BJ (cell line): ENCODE measurements at regions of chr11 and their contacts with region 1.

Region 1: DNA sequence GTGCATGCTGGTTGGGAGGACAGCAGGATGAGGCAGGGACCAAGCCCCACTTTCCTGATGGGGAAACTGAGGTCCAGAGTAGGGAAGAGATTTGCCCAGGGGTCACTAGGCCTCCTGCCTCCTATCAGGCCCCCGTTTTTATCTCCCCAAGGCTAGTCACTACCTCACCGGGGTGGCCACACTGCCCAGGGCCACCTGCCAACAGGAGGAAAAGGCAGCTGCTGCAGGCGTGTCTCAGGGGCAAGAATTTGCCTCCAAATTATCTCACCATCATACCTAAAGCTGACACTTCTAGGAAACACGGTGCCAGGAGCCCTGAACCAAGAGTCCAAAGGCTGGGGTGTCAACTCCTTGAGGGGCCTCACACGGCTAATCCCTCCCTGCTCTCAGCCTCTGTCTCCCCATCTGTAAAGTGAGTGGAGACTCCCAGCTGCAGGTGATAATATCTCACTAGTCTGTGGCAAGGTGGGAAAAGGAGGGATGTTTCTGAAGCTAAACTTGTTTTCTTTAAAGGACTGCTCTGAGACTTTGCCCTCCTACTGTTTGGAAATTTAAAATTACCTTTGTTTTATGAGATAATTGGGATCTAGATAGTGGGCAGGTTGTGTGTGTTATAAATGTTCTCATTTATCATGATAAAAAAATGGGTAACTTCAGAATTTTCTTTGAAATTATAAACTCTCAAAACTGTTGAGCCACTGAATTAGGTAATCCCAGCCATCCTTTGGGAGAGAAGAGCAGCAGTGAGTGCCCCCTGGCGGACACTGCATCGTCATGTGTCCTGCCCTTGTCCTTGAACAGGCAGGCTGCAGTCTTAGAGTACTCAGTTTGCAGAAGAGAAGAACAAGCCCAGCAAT is 60.0 kb downstream of the MYO7A start:
- DNase-seq: no peak
- H3K4me3 ChIP-seq: no peak overlapping the region
- H3K27me3 ChIP-seq: peaks cover 6% of the 10 kb centered on the region
- CTCF ChIP-seq: peak; percentile 92

Region 2: DNA sequence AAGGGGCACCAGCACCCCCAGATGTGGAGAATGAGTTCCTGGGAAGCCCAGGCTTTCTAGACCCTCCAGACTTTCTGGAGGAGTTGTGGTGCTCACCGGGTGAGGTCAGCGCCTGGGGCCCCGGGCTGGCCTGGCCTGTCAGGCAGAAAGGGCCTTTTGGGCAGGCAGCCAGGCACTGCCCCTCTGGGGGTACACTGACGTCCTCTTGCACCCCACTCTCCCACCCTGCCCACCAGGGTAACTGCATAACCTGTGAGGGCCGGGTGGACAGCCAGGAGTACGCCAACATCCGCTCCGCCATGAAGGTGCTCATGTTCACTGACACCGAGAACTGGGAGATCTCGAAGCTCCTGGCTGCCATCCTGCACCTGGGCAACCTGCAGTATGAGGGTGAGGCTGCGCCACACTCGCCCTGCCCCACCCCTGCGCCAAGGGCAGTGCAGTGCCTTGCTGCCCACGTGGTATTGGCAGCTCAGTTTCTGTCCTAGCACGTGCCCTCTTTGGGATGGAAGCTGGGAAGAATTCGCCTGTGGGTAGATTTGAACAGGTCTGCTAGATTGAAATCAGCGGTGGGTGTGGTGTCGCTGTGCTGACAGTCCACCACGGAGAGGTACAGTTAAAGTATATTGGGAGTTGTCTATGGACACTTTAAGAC is 29.8 kb before region 1 on chr11:
- CTCF ChIA-PET with region 1: no interaction called
- POLR2A ChIA-PET with region 1: no interaction called
- DNase-seq: no peak
- H3K4me3 ChIP-seq: no peak overlapping the region
- H3K27me3 ChIP-seq: peaks cover 7% of the 10 kb centered on the region
- CTCF ChIP-seq: no peak

Region 3: DNA sequence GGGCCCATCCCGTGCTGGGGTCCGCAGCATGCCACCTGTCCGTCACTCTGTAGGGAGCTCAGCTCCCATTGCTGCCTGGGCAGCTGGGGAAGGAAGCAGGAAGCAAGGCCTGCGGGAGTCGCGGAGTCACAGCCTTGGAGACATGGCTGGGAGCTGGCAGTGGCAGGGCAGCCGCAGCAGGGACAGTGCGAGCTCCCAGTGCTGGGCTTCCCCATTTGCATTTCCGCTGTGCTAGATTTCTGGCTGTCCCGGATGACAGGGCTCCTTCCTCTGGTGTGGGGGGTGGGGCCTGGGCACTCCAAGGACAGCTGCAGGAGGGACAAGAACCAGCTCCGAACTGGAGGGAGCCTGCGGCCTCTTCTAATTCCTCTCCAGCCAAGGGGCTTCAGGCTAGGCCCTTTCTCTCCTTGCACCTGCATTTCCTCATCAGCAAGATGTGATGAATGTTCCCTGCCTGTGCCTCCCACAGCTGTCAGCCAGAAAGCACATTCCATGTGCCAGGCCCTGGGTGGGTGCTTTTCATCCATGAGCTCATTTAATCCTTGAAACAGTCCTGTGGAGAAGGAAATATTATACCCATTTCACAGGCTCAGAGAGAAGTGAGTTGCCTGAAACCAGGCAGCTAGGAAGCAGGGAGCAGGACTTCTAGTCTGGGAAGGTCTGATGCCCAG is 12.0 kb before region 1 on chr11:
- CTCF ChIA-PET with region 1: interaction called, 27 read pairs
- POLR2A ChIA-PET with region 1: no interaction called
- DNase-seq: no peak
- H3K4me3 ChIP-seq: no peak overlapping the region
- H3K27me3 ChIP-seq: peaks cover 3% of the 10 kb centered on the region
- CTCF ChIP-seq: no peak

Region 4: GRCh38 chr11:77542296-77542695 is 354.3 kb after region 1 on chr11:
- CTCF ChIA-PET with region 1: interaction called, 11 read pairs
- POLR2A ChIA-PET with region 1: no interaction called
- DNase-seq: peak; percentile 25
- H3K4me3 ChIP-seq: no peak overlapping the region
- H3K27me3 ChIP-seq: no peaks in the 10 kb centered on the region
- CTCF ChIP-seq: no peak